ENCODE measurements at regions of chr11 and their contacts with region 1.

Region 1: DNA sequence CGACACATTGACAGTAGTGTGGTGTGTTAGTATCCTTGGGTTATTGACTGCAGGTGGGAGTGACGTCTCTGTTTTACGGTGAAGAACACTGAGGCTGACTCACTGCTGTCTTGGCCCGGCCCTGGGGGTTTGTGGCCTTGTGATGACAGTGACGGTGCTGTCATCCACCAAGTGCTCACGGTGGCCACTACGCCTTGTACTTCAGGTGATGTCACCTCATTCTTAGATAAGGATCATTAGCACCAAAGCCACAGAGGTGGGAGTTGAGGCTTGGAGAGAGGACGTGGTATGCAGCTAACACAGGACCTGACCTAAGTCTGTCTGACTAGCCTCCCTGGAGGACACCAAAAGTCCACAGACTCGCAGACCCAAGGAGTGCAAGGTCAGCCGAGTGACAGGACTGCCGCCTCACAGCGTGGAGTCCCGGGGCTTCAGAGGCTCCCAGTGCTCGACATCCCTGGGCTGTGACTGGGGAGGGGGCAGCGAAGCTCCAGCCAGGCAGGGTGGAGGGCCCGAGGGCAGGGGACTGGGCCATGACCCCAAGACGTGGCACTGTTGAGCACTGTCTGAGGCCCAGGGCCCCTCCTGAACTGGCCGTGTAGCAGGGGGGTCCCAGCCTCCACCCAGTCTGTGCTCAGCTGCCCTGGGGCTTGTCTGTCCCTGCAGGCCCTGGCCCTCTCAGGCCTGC is 56.5 kb downstream of the NAT10 start:
- DNase-seq: no peak
- ATAC-seq: peak; percentile 5; the same call in 2 of the 3 replicates
- H3K4me3 ChIP-seq: no peak overlapping the region
- H3K27ac ChIP-seq: no peak overlapping the region
- H3K4me1 ChIP-seq: no peaks in the 10 kb centered on the region
- H3K27me3 ChIP-seq: no peaks in the 10 kb centered on the region
- CTCF ChIP-seq: no peak
- EP300 ChIP-seq: no peak
- POLR2A ChIP-seq: no peak
- RAD21 ChIP-seq: no peak

Region 2: DNA sequence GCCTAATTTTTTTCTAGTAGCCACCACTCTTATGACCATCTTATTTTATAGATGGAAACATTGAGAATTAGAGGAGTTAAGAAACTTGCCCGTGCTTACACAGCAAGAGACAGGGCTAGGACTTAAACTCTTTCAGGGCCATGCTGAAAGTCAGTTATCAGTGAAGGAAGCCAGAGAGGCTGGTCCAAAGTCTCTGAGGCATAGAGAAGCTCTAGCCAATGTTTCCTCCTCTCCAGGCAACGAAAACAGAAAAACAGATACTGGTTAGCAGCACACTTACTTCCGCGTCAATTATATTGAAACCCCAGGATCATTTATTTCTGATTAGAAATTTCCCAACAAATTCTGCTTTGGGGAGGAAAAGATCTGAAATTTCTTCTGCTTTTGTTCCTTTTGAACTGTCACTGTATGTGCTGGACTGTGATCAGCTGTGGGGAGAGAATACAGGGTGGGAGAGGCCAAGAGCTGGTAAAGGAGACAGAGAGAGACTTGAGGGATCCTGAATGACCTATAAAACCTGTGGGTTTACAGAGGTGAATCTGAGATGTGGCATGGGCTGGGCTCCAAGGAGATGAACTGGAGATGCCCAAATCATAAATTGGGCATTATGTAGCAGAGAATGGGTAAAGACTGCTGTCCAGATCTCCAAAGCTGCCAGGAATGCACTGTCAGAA is 147.9 kb before region 1 on chr11:
- CTCF ChIA-PET with region 1: no interaction called
- POLR2A ChIA-PET with region 1: no interaction called
- in situ Hi-C with region 1: no loop called
- intact Hi-C with region 1: no loop called
- DNase-seq: no peak
- ATAC-seq: peak; percentile 60; the same call in 2 of the 3 replicates
- H3K4me3 ChIP-seq: no peak overlapping the region
- H3K27ac ChIP-seq: no peak overlapping the region
- H3K4me1 ChIP-seq: no peaks in the 10 kb centered on the region
- H3K27me3 ChIP-seq: no peaks in the 10 kb centered on the region; a peak in 1 of 5 replicates
- CTCF ChIP-seq: no peak
- EP300 ChIP-seq: no peak
- POLR2A ChIP-seq: no peak
- RAD21 ChIP-seq: no peak

Region 3: GRCh38 chr11:34380696-34381095 is 218.7 kb after region 1 on chr11:
- CTCF ChIA-PET with region 1: no interaction called
- POLR2A ChIA-PET with region 1: no interaction called
- in situ Hi-C with region 1: no loop called
- intact Hi-C with region 1: no loop called
- DNase-seq: peak; percentile 31
- ATAC-seq: no peak
- H3K4me3 ChIP-seq: no peak overlapping the region
- H3K27ac ChIP-seq: no peak overlapping the region
- H3K4me1 ChIP-seq: peaks cover 10% of the 10 kb centered on the region
- H3K27me3 ChIP-seq: no peaks in the 10 kb centered on the region
- CTCF ChIP-seq: no peak
- EP300 ChIP-seq: peak in 1 of 2 experiments; percentile 77; a peak in 2 of 4 replicates
- POLR2A ChIP-seq: no peak
- RAD21 ChIP-seq: no peak

Region 4: DNA sequence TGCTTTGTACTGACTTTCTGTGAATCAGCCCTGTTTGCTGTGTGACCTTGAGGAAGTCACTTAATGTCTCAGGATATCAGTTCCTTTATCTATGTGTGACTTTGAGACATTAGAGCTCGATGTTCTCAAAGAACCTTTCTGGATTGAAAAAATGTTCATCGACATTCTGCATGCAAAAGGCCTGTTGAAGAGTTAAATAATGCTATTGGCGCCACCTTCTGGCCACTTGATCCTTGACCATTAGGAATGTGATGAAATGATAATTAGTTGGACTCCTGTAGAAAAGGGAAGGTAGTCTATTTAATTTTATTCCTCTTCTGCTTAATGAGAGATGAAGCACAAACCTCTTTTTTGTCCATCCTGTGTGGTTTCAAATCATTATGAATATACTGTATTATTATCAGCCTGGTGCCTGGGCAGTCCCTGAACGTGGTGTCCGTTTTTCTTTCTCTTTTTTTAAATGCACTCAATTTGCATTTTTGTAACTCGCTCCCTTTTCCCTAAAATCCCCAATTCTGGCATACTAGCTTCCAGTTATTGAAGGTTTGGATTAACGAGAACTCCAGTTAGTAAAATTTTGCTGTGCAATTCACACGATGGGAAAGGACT is 331.0 kb after region 1 on chr11:
- CTCF ChIA-PET with region 1: no interaction called
- POLR2A ChIA-PET with region 1: no interaction called
- in situ Hi-C with region 1: loop called (anchors 10 kb)
- intact Hi-C with region 1: no loop called
- DNase-seq: peak; percentile 68
- ATAC-seq: peak; percentile 49
- H3K4me3 ChIP-seq: no peak overlapping the region
- H3K27ac ChIP-seq: no peak overlapping the region
- H3K4me1 ChIP-seq: peaks cover 43% of the 10 kb centered on the region
- H3K27me3 ChIP-seq: no peaks in the 10 kb centered on the region
- CTCF ChIP-seq: peak; percentile 80
- EP300 ChIP-seq: no peak
- POLR2A ChIP-seq: no peak
- RAD21 ChIP-seq: peak; percentile 58; the same call in 1 of the 2 replicates

Measured in HepG2 (cell line).